RWPE1 (cell line): ENCODE measurements at regions of chr15 and their contacts with region 1.

Region 1: GRCh38 chr15:89057504-89058133 is 30.6 kb upstream of the ABHD2 start:
- DNase-seq: peak; percentile 88
- H3K27ac ChIP-seq: no peak overlapping the region
- CTCF ChIP-seq: peak; percentile 99

Region 2: DNA sequence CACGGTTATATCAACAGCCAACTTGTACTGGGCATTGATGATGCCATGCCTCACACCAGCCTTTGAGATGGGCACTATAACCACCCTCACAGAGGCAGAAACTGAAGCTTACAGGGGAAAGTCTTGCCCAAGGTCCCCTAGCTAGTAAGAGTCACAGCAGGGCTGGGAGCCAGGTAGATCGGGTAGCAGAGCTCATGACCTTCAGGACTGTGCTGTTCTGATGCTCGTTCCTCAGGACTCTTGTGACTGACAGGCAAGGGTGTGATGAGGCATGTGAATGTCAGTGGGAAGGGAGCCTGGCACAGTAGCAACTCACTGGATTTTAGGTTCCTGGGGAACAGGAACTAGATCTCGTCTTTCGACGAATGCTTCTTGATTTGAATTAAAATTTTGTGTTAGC is 98.0 kb after region 1 on chr15:
- CTCF ChIA-PET with region 1: interaction called, 10 read pairs
- POLR2A ChIA-PET with region 1: no interaction called
- DNase-seq: no peak
- H3K27ac ChIP-seq: no peak overlapping the region
- CTCF ChIP-seq: no peak

Region 3: DNA sequence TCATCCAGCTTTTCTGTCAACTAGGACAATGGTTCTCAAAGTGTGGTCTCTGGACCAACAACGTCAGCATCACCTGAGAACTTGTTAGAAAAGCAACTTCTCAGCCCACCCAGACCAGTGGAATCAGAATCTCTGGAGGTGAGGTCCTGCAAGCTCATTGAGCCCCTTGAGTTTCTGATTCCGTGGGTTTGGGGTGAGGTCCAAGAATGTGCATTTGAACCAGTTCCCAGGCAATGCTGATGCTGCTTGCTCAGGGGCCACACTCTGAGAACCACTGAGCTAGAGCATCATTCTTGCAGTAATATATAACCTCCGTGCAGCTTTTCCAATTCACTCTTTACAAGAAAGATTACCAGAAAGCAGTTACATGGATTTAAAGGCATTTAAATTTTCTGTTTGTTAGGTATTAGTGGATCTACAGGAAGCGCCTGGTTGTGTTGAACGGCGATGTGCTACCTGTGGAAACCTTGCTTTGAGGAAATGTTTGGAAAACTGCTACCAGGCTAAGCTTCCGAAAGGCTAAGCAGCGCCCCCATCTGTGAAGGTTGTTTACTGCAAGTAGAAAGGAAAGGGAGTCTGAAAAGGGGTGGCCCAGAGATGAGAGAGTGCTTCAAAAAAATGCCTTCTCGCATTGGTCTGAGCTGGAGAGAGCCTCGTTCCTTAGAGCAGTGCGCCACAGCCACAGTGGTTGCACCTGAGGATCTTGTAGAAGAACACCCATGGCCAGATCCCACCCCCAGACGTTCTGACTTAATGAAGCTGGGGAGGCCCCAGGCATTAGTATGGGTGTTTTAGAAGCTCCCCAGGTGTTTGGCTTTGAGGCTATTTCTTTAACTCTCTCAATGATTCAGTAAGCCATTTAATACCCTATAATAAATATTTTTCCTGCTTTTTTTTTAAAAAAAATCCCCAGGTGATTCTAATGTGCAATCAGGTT is 113.8 kb after region 1 on chr15:
- CTCF ChIA-PET with region 1: interaction called, 32 read pairs
- POLR2A ChIA-PET with region 1: no interaction called
- DNase-seq: peak; percentile 33
- H3K27ac ChIP-seq: no peak overlapping the region
- CTCF ChIP-seq: peak; percentile 65

Region 4: DNA sequence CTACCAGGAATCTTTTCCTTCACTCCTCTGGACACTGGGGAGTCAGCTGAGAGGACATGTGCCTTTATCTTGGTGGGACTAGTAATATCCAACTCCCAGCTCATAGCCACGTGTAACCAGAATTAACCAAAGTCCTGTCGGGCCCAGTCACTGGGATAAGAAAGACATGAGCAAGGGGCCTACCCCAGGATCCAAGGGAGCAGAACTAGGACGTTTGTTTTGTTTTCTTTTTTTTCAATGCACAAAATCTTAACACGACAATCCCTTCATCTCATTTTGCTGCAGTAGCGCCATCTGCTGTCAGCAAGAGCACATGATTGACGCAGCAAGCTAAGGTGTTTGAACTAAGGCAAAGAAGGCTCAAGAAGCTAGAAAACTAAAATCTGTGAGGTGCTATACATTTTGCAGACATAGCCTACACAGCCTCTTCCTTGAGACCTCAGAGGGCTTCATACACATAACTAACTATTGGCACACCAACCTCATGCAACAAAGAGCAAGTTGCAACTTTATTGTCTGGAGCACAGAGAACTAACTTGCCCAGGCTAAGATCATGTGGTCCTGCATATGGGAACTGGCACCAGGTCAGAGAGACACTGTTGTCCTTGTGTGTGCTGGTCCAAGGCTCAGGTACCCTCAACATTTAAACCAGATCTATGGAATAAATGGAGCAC is 120.2 kb after region 1 on chr15:
- CTCF ChIA-PET with region 1: interaction called, 37 read pairs
- POLR2A ChIA-PET with region 1: no interaction called
- DNase-seq: peak; percentile 55
- H3K27ac ChIP-seq: no peak overlapping the region
- CTCF ChIP-seq: peak; percentile 95